PC-9 (cell line): ENCODE measurements at regions of chr4 and their contacts with region 1.

Region 1: GRCh38 chr4:156968479-156968984 is 3.1 kb downstream of the PDGFC start:
- DNase-seq: peak; percentile 38 to 57
- H3K4me3 ChIP-seq: peak overlapping the region; percentile 14; the same call in 1 of the 2 replicates
- H3K27ac ChIP-seq: no peak overlapping the region
- H3K4me1 ChIP-seq: peaks cover 14% of the 10 kb centered on the region
- H3K27me3 ChIP-seq: no peaks in the 10 kb centered on the region
- CTCF ChIP-seq: peak; percentile 82

Region 2: DNA sequence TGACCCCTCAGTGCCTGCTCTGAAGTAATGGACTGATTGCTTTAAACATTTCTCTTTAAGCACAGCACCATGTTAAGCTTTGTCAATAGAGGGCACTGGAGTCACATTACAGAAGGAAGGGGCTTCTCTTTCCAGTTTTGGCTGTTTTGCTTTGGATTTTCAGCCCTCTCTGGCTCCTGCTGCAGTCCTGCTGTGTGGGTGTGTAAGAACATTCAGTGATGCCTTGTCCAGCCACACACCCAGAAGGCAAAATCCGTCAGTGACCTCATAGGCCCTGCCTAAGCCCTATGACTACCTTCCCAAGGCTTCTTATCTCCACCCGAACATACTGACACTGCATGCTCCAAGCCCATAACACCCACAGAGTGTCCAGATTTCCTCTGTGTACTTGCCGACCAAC is 799.5 kb before region 1 on chr4:
- CTCF ChIA-PET with region 1: no interaction called
- POLR2A ChIA-PET with region 1: no interaction called
- intact Hi-C with region 1: loop called (anchors 2 kb)
- DNase-seq: peak in 1 of 2 experiments; percentile 28
- H3K4me3 ChIP-seq: no peak overlapping the region
- H3K27ac ChIP-seq: no peak overlapping the region
- H3K4me1 ChIP-seq: no peaks in the 10 kb centered on the region
- H3K27me3 ChIP-seq: no peaks in the 10 kb centered on the region
- CTCF ChIP-seq: peak; percentile 43; the same call in 1 of the 2 replicates

Region 3: DNA sequence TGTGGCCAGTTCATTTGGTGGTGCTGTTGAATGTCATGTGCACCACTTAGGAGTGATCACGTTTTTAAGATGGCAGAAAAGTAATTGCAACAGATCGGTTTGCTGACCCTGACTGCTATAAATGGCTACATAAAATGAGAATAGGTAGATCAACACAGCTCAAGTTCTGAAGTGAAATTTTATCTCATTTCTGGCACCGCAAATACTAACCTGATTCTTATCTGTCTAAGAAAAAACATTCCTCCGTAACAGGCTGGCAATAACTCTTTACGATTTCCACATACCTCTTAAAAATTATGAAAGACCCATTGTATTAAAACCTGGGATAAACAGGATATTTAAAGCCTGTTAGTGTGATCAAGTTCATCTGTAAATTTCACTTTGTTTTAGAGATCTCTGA is 384.4 kb before region 1 on chr4:
- CTCF ChIA-PET with region 1: interaction called, 7 read pairs
- POLR2A ChIA-PET with region 1: no interaction called
- intact Hi-C with region 1: loop called (anchors 5 kb)
- DNase-seq: peak; percentile 8 to 67
- H3K4me3 ChIP-seq: no peak overlapping the region
- H3K27ac ChIP-seq: peak overlapping the region; percentile 29
- H3K4me1 ChIP-seq: peaks cover 10% of the 10 kb centered on the region
- H3K27me3 ChIP-seq: no peaks in the 10 kb centered on the region
- CTCF ChIP-seq: no peak

Region 4: DNA sequence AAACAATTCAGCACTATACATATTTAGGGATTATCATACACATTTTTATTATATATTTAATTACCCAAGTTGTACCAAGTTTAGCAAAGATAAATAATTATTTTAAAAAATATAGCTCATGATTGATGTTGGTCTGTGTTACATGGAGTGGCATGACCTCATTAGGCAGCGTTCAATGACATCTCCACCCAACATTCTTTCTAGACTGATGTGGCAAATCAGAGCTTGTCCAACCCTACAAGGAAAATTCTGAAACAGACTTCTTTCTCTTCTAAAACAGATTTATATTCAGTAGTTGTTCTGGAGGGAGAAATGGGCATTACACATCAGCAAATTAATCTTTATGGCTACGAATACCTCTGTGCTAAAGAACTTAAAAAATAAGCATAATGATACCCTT is 186.7 kb before region 1 on chr4:
- CTCF ChIA-PET with region 1: no interaction called
- POLR2A ChIA-PET with region 1: no interaction called
- intact Hi-C with region 1: no loop called
- DNase-seq: no peak
- H3K4me3 ChIP-seq: no peak overlapping the region
- H3K27ac ChIP-seq: no peak overlapping the region
- H3K4me1 ChIP-seq: peaks cover 15% of the 10 kb centered on the region
- H3K27me3 ChIP-seq: no peaks in the 10 kb centered on the region
- CTCF ChIP-seq: no peak

Region 5: GRCh38 chr4:156999175-156999516 is 30.6 kb after region 1 on chr4:
- CTCF ChIA-PET with region 1: interaction called, 5 read pairs
- POLR2A ChIA-PET with region 1: no interaction called
- intact Hi-C with region 1: loop called (anchors 1 kb)
- DNase-seq: peak; percentile 85 to 90
- H3K4me3 ChIP-seq: peak overlapping the region; percentile 28
- H3K27ac ChIP-seq: peak overlapping the region; percentile 69
- H3K4me1 ChIP-seq: peaks cover 26% of the 10 kb centered on the region
- H3K27me3 ChIP-seq: no peaks in the 10 kb centered on the region
- CTCF ChIP-seq: no peak

Region 6: DNA sequence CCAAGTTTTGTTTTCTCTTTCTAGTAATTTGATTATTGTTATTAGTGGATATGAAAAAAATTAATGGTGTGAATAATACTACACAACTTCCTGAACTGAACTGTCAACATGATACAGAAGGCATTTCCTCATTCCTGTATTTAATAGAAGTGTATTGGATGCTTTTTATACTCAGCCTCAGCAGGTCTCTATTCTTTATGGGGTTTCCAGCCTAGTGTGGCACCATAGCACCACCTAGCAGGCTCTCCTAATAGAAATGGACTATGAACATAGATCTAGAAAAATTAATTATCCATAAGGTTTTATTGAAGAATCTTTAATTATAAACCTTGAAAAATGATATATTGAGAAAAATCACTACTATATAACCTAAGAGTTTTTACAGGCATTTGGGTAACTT is 159.9 kb after region 1 on chr4:
- CTCF ChIA-PET with region 1: no interaction called
- POLR2A ChIA-PET with region 1: no interaction called
- intact Hi-C with region 1: loop called (anchors 1 kb)
- DNase-seq: peak; percentile 37 to 43
- H3K4me3 ChIP-seq: no peak overlapping the region
- H3K27ac ChIP-seq: no peak overlapping the region
- H3K4me1 ChIP-seq: no peaks in the 10 kb centered on the region
- H3K27me3 ChIP-seq: no peaks in the 10 kb centered on the region
- CTCF ChIP-seq: peak; percentile 57